ENCODE measurements at regions of chr9 and their contacts with region 1.

Region 1: DNA sequence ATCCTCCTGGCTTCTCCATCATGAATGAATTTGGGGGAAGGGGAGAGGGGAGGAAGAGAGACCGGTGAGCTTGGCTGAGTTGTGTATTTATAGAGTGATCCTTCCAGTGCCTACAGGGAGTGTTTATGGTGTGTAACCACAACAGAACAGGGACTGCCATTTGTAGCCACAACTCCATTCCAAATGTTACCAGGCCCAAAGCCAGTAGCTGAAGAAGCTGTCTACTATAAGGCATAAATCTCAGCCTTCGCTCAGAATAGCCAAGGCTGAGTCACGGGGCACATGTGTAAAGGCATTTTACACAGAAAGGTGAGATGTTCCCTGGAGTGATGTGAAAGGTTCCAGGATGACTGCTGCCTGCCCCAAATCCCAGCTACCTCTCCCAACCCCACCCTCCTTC is 2.5 kb downstream of the TMEM252 start:
- DNase-seq: no peak
- ATAC-seq: peak; percentile 93

Region 2: GRCh38 chr9:68446836-68447235 is 91.4 kb before region 1 on chr9:
- intact Hi-C with region 1: loop called (anchors 1 kb)
- DNase-seq: no peak
- ATAC-seq: peak; percentile 22